Activated CD8-positive, alpha-beta memory T cell treated with anti-CD3 and anti-CD28 coated beads, Interleukin-2, amount 10 ng/mL, durations not matched to agents 7 days and 5 days (primary cell): ENCODE measurements at regions of chr7 and their contacts with region 1.

Region 1: GRCh38 chr7:71733107-71733870 is 601.3 kb downstream of the GALNT17 start:
- DNase-seq: peak; percentile 62
- ATAC-seq: no peak
- H3K4me3 Mint-ChIP-seq: no peak overlapping the region
- H3K27ac Mint-ChIP-seq: no peak overlapping the region
- H3K4me1 Mint-ChIP-seq: no peaks in the 10 kb centered on the region
- H3K27me3 Mint-ChIP-seq: no peaks in the 10 kb centered on the region

Region 2: DNA sequence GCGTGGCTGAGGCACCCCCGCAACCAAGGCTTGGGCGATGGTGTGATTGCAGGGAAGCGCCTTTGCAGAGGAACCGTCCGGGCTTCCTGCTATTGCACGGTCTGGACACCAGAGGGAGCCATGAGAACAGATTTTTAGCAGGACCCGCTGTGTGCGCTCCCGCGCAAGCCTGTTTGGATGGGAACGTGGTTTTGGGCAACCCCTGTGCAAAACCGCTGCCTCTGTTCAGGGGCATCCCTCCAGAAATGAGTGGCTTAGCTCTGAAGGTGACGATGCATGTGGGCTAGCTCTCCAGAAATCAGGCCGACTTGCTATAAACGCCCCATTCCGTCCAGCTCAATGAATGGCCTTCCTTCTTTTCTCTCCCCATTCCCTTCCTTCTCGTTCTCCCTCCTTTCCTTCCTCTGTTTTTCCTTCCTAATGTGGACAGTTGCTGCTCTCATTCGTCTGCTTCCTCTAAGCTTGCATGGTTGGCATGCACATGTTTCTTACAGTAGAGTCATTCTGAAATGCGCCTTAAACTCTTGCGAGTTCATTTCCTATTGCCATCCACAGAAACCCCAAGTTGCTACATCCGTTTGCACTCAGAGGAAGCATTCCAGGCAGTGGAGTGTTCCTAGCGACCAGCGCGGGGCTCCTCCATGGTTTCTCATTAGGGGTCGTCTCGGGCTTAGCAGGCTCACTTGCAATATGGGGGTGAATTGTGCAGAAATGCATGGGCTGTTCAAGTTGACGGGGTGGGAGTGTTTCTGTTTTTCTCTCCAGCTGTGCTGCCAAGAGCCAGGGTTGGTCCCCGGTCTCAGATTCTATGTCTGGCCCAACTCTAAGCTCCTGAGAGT is 903.8 kb before region 1 on chr7:
- CTCF ChIA-PET with region 1: interaction called, 19 read pairs
- DNase-seq: peak; percentile 78
- ATAC-seq: peak; percentile 65
- H3K4me3 Mint-ChIP-seq: peak overlapping the region; percentile 6
- H3K27ac Mint-ChIP-seq: no peak overlapping the region
- H3K4me1 Mint-ChIP-seq: peaks cover 8% of the 10 kb centered on the region
- H3K27me3 Mint-ChIP-seq: peaks cover 4% of the 10 kb centered on the region

Region 3: DNA sequence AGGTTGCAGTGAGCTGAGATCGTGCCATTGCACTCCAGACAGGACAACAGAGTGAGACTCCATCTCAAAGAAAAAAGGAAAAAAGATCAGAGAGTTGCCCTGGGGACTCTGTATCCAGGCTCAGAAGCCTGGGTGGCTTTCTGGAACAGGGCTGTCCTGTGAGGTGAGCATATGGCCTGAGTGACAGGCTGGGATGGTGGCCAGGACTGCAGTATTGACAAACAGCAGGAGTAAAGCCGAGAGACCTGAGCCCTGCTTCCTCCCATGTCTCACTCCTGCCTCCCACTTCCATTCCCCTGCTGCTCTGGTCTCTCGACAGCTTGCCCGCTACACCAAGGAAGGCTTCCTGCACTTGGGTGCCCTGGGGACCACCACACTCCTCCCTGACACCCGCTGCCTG is 22.8 kb before region 1 on chr7:
- CTCF ChIA-PET with region 1: no interaction called
- DNase-seq: no peak
- ATAC-seq: no peak
- H3K4me3 Mint-ChIP-seq: no peak overlapping the region
- H3K27ac Mint-ChIP-seq: no peak overlapping the region
- H3K4me1 Mint-ChIP-seq: no peaks in the 10 kb centered on the region
- H3K27me3 Mint-ChIP-seq: no peaks in the 10 kb centered on the region